HEK293 (cell line): ENCODE measurements at regions of chr9 and their contacts with region 1.

Region 1: DNA sequence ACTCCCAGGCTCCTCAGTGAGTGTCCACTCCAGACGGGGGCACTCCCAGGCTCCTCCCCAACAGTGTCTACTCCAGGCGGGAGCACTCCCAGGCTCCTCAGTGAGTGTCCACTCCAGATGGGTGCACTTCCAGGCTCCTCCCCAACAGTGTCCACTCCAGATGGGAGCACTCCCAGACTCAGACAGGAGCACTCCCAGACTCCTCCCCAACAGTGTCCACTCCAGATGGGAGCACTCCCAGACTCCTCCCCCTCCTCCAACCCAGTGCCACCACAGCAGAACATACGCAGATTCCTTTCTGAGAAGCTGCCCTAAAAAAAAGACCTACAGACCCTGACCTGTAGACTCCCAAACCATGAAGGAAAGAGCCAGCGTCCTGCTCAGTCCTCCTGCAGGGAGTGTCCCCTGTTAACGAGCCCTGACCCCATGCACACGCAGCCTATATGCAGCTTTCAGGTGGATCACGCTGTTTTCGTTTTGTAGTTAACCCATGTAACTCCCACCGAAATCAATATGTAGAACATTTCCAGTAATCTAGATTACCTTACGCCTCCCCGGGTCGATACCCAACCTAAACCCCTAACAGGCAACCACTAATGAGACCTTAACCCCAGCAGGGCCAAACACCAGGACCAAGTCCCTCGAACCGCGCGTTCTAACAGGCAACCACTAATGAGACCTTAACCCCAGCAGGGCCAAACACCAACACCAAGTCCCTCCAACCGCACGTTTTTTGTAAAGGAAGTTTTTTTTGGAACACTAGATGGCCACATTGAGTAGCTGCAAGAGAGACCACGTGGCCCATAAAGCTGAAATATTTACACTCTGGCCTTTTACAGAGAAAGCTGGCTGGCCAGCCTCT is 15.7 kb downstream of the PNPLA7 start:
- H3K4me3 ChIP-seq: no peak overlapping the region
- H3K27ac ChIP-seq: no peak overlapping the region
- H3K4me1 ChIP-seq: no peaks in the 10 kb centered on the region
- CTCF ChIP-seq: peak; percentile 78

Region 2: DNA sequence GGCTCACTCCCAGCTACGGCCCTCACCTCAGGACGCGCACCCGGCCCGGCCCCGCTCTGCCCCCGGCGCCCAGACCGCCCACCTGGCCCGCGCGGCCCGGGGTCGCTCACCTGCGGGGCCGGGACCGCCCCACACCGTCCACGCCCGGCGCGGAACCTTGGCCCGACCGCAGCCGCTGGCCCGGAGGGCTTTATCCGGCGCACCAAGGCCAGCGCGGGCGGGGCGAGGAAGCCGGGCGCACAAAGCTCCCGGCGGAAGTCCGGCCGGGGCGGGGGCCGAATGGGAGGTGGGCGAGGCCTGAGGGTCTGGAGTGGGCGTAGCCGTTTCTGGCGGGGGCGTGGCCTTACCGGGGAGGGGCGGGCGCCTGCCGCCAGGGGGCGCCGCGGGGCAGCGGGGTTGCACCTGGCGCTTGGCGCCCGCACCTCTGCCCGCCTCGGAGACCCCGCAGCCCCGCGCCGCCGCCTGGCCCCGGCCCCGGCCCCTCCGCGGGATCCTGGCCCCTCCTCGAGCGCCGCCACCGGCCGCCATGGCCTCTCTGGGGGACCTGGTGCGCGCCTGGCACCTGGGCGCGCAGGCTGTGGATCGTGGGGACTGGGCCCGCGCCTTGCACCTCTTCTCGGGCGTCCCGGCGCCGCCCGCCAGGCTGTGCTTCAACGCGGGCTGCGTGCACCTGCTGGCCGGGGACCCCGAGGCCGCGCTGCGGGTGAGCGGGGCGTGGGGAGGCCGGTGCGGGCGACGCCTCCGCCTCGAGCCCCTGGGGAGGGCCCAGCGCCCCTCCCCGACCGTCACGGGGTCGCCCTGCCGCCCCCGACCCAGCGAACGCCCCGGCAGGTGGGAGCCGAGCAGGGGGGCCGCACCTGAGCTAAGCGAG is 111.2 kb before region 1 on chr9 and contains the starts of genes EXD3 and NOXA1:
- CTCF ChIA-PET with region 1: interaction called, 10 read pairs
- POLR2A ChIA-PET with region 1: no interaction called
- H3K4me3 ChIP-seq: peak within 1 kb of the TSS; percentile 85
- H3K27ac ChIP-seq: peak within 1 kb of the TSS; percentile 86
- H3K4me1 ChIP-seq: peaks cover 9% of the 10 kb centered on the region
- CTCF ChIP-seq: peak; percentile 47; the same call in 1 of the 2 replicates

Region 3: GRCh38 chr9:137524161-137524983 is 10.1 kb before region 1 on chr9:
- CTCF ChIA-PET with region 1: interaction called, 13 read pairs
- POLR2A ChIA-PET with region 1: no interaction called
- H3K4me3 ChIP-seq: no peak overlapping the region
- H3K27ac ChIP-seq: no peak overlapping the region
- H3K4me1 ChIP-seq: no peaks in the 10 kb centered on the region
- CTCF ChIP-seq: no peak

Region 4: GRCh38 chr9:137545123-137545522 is 10.6 kb after region 1 on chr9:
- CTCF ChIA-PET with region 1: interaction called, 35 read pairs
- POLR2A ChIA-PET with region 1: no interaction called
- H3K4me3 ChIP-seq: no peak overlapping the region
- H3K27ac ChIP-seq: no peak overlapping the region
- H3K4me1 ChIP-seq: no peaks in the 10 kb centered on the region
- CTCF ChIP-seq: no peak

Region 5: DNA sequence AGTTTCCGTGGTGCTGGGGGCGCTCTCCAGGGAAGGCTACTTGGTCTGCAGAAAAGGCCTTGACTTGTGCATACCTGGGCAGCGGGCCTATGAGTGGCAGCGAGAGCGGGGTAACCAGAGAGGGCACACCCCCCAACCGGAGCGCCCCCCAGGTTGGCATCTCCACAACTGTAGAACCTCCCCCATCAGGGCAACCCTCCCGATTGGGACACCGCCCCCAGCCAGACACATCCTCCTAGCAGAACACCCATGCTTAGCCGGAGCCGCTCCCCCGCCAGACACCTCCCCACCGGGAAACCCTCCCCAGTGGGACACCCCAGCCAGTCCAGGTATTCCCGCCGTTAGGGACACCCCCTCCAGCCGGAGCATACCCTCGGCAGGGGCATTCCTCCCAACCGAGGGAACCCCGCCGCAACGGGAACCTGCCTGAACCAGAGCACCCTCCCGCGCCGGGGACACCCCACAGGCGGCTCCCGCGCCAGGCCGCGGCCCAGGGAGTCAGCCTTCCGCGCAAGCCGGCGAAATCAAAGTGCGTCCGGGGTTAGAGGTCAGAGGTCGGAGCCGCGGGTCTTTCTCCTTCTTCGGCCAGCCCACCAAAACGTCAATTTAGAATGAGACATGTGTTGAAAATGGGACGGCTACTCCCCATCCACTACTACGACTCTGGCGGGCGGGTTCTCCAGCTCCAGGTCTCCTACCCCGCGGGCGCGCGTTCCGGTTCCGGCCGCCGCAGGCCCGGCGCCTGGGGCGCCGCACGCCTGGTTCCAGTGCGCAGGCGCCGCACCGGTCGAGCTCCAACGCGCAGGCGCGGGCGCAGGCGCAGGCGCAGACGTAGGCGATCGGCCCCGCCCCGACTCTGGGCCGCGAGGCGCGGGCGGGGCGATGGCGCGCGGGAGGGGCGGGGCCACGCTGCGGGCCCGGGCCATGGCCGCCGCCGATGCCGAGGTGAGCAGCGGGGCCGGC is 83.9 kb after region 1 on chr9 and contains the start of gene EHMT1:
- CTCF ChIA-PET with region 1: no interaction called
- POLR2A ChIA-PET with region 1: no interaction called
- H3K4me3 ChIP-seq: peak within 1 kb of the TSS; percentile 90
- H3K27ac ChIP-seq: peak within 1 kb of the TSS; percentile 91
- H3K4me1 ChIP-seq: no peaks in the 10 kb centered on the region
- CTCF ChIP-seq: peak; percentile 57